ENCODE measurements at regions of chr12 and their contacts with region 1.

Region 1: GRCh38 chr12:59834659-59835474 is 239.0 kb downstream of the SLC16A7 start:
- DNase-seq: peak; percentile 28
- ATAC-seq: no peak
- H3K4me3 ChIP-seq: no peak overlapping the region
- H3K4me3 Mint-ChIP-seq: no peak overlapping the region
- H3K27ac ChIP-seq: no peak overlapping the region
- H3K27ac Mint-ChIP-seq: no peak overlapping the region
- H3K4me1 ChIP-seq: no peaks in the 10 kb centered on the region
- H3K4me1 Mint-ChIP-seq: no peaks in the 10 kb centered on the region
- H3K27me3 ChIP-seq: no peaks in the 10 kb centered on the region
- H3K27me3 Mint-ChIP-seq: peaks cover 3% of the 10 kb centered on the region
- CTCF ChIP-seq: peak; percentile 72

Region 2: DNA sequence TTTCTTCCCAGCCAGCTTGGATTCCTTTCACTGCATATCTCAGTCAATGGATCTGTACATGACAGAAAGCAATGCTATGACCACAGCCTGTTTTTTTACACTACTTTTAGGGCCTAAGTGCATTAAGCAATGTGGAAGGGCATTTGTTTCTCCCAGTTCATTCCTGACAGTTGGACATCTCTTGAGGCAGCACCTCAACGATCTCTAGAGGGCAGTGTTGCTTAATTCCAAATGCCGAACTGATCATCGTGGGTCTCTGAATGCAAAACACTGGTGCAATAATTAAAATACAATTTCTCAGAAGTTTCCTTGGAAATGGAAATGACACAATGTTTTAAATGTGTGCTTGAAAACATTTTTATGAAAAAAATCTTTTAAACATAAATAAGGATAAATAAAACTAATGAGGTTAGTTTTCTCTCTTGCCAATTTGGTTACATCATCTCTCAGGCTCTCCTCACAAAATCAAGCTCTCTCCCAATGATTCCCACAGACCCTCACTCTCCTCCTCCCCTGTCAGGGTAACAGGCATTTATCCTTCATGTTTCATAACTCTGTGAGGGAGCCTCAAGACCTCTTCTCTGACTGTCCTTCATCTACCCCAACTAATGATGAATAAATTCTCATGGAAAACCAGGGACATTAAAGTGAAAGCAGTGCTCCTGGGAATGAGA is 431.5 kb before region 1 on chr12:
- CTCF ChIA-PET with region 1: interaction called, 14 read pairs
- POLR2A ChIA-PET with region 1: no interaction called
- intact Hi-C with region 1: loop called (anchors 1 kb)
- DNase-seq: peak; percentile 54
- ATAC-seq: no peak
- H3K4me3 ChIP-seq: no peak overlapping the region
- H3K4me3 Mint-ChIP-seq: no peak overlapping the region
- H3K27ac ChIP-seq: no peak overlapping the region
- H3K27ac Mint-ChIP-seq: no peak overlapping the region
- H3K4me1 ChIP-seq: no peaks in the 10 kb centered on the region
- H3K4me1 Mint-ChIP-seq: peaks cover 2% of the 10 kb centered on the region
- H3K27me3 ChIP-seq: peaks cover 0 to 4% (median 0%) of the 10 kb centered on the region in 4 experiments
- H3K27me3 Mint-ChIP-seq: no peaks in the 10 kb centered on the region
- CTCF ChIP-seq: peak; percentile 83

Region 3: GRCh38 chr12:59444932-59445331 is 389.9 kb before region 1 on chr12:
- CTCF ChIA-PET with region 1: interaction called, 15 read pairs
- POLR2A ChIA-PET with region 1: no interaction called
- intact Hi-C with region 1: no loop called
- DNase-seq: peak; percentile 39
- ATAC-seq: no peak
- H3K4me3 ChIP-seq: no peak overlapping the region
- H3K4me3 Mint-ChIP-seq: no peak overlapping the region
- H3K27ac ChIP-seq: no peak overlapping the region
- H3K27ac Mint-ChIP-seq: no peak overlapping the region
- H3K4me1 ChIP-seq: no peaks in the 10 kb centered on the region
- H3K4me1 Mint-ChIP-seq: no peaks in the 10 kb centered on the region
- H3K27me3 ChIP-seq: no peaks in the 10 kb centered on the region
- H3K27me3 Mint-ChIP-seq: peaks cover 4% of the 10 kb centered on the region
- CTCF ChIP-seq: peak; percentile 54

Region 4: DNA sequence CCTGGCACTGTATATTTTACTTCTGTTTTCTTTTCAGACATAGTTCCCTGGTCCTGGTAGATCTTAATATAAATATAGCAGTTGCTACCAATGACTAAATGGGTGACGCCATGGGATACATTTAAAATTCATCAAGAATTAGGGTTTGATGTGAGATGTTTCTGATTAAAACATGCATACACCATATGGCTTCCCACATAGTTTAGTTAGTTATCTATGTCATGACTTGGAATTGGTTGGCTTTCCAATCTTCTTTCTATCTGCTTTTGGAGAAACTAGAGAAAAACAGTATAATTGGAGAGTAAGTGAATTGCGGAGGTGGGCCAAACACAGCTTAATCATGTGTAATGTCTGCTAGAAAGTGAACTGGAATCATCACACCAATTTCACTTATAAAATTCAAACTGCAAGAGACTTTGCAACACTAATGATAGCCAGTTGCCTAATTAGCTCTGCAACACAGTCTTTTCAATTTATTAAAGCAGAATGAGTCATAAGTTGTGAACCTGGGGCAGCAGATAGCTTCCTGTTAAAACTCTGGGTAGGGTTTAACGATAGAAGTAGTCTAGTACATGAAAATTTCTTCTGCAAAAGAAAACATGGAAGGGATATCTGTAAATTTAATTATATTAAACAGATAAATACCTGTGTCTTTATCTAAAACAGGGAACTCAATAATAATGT is 56.2 kb after region 1 on chr12:
- CTCF ChIA-PET with region 1: no interaction called
- POLR2A ChIA-PET with region 1: no interaction called
- intact Hi-C with region 1: no loop called
- DNase-seq: no peak
- ATAC-seq: no peak
- H3K4me3 ChIP-seq: no peak overlapping the region
- H3K4me3 Mint-ChIP-seq: no peak overlapping the region
- H3K27ac ChIP-seq: no peak overlapping the region
- H3K27ac Mint-ChIP-seq: no peak overlapping the region
- H3K4me1 ChIP-seq: no peaks in the 10 kb centered on the region
- H3K4me1 Mint-ChIP-seq: no peaks in the 10 kb centered on the region
- H3K27me3 ChIP-seq: no peaks in the 10 kb centered on the region
- H3K27me3 Mint-ChIP-seq: no peaks in the 10 kb centered on the region
- CTCF ChIP-seq: no peak

Region 5: GRCh38 chr12:60123408-60124000 is 288.6 kb after region 1 on chr12:
- CTCF ChIA-PET with region 1: no interaction called
- POLR2A ChIA-PET with region 1: no interaction called
- intact Hi-C with region 1: no loop called
- DNase-seq: no peak
- ATAC-seq: no peak
- H3K4me3 ChIP-seq: no peak overlapping the region
- H3K4me3 Mint-ChIP-seq: no peak overlapping the region
- H3K27ac ChIP-seq: no peak overlapping the region
- H3K27ac Mint-ChIP-seq: no peak overlapping the region
- H3K4me1 ChIP-seq: no peaks in the 10 kb centered on the region
- H3K4me1 Mint-ChIP-seq: no peaks in the 10 kb centered on the region
- H3K27me3 ChIP-seq: no peaks in the 10 kb centered on the region
- H3K27me3 Mint-ChIP-seq: no peaks in the 10 kb centered on the region
- CTCF ChIP-seq: no peak

Measured in B cell (primary cell).